ENCODE measurements at regions of chr1 and their contacts with region 1.

Region 1: GRCh38 chr1:156020292-156021089 is at the start of gene SSR2:
- DNase-seq: peak; percentile 92
- H3K4me3 Mint-ChIP-seq: peak within 1 kb of the TSS; percentile 98
- H3K27ac Mint-ChIP-seq: peak within 1 kb of the TSS; percentile 91
- H3K4me1 Mint-ChIP-seq: peaks cover 21% of the 10 kb centered on the region
- H3K27me3 Mint-ChIP-seq: no peaks in the 10 kb centered on the region
- total RNA-seq, gene SSR2: 171 to 175 TPM

Region 2: DNA sequence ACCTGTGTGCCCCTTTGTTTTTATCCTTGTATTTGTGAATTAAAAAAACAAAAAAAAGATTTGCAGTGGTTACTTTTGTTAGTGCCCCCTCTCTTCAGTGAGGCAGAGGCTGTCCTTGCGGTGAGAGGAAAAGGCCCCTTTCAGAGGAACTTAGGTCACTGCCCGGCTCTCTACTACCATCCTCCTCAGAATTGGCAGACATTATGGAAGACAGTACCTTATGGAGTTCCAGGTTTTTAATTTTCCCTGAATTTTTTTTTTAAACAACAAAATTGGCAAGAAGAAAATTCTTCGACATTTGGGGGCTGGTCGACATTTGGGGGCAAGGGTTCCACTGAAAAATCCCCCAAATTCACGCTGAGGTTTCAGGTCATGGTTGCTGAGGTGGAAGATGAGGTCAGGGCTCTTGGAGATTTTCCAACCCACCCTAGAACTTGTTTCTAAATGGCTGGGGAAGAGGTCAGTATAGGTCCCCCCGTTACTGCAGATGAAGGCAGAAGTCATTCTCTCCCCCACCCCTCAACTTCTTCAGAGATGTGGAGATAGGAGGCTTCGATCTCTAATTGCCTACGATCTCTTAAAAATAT is 73.8 kb before region 1 on chr1:
- CTCF ChIA-PET with region 1: no interaction called
- POLR2A ChIA-PET with region 1: no interaction called
- intact Hi-C with region 1: loop called (anchors 2 kb)
- DNase-seq: no peak
- H3K4me3 Mint-ChIP-seq: peak overlapping the region; percentile 65
- H3K27ac Mint-ChIP-seq: peak overlapping the region; percentile 98
- H3K4me1 Mint-ChIP-seq: peaks cover 50% of the 10 kb centered on the region
- H3K27me3 Mint-ChIP-seq: no peaks in the 10 kb centered on the region

Region 3: DNA sequence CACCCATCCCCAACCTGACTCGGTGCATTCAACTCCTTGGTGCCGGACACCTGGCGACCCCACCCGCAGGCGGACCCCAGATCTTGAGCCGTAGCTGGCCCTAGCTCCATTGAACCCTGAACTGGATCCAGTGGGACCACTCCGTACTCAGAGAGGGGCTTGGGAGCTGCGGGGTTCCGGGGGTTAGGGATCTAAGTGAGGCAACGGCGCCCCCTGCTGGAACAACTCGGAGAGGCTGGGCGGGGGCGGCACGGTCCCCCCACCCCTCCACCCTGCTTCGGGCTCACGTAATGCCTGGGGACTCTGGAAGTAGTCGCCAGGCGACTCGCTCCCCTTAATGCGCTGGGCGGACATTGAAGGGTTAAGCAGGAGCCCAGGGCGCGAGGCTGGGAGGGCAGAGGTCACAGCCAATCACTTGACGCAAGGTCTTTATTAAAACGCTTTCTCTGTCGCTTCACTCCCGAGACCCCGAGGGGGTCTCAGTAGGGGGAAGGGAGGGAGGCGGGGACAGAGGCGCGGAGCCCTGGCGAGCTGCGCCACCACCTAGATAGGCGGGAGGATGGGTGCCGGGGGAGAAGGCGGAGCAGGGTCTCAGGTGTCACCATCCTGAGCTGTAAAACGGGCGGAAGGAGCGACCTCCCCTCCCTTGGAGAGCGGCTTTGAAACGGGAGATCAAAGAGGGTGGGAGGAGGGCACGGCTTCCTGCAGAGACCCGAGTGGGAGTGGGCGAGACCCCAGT is 685.6 kb after region 1 on chr1:
- CTCF ChIA-PET with region 1: no interaction called
- POLR2A ChIA-PET with region 1: no interaction called
- intact Hi-C with region 1: no loop called
- DNase-seq: peak; percentile 82
- H3K4me3 Mint-ChIP-seq: peak overlapping the region; percentile 75
- H3K27ac Mint-ChIP-seq: no peak overlapping the region
- H3K4me1 Mint-ChIP-seq: peaks cover 28% of the 10 kb centered on the region
- H3K27me3 Mint-ChIP-seq: peaks cover 24% of the 10 kb centered on the region

Measured in activated CD4-positive, alpha-beta memory T cell treated with anti-CD3 and anti-CD28 coated beads for 36 hours (primary cell).